CD4-positive, alpha-beta memory T cell (primary cell): ENCODE measurements at regions of chr13 and their contacts with region 1.

Region 1: GRCh38 chr13:25874907-25875306 is 176.9 kb downstream of the SHISA2 start:
- DNase-seq: peak; percentile 63 to 84 (median 73)
- H3K4me3 ChIP-seq: no peak overlapping the region
- H3K4me3 Mint-ChIP-seq: peak overlapping the region; percentile 34 to 85 (median 58)
- H3K27ac ChIP-seq: peak overlapping the region; percentile 44
- H3K27ac Mint-ChIP-seq: peak overlapping the region; percentile 67 to 91 (median 84)
- H3K4me1 ChIP-seq: peaks cover 49% of the 10 kb centered on the region
- H3K4me1 Mint-ChIP-seq: peaks cover 37 to 69% (median 54%) of the 10 kb centered on the region in 4 donors
- H3K27me3 ChIP-seq: no peaks in the 10 kb centered on the region
- H3K27me3 Mint-ChIP-seq: no peaks in the 10 kb centered on the region

Region 2: GRCh38 chr13:25602176-25602575 is 272.7 kb before region 1 on chr13:
- CTCF ChIA-PET with region 1: no interaction called
- POLR2A ChIA-PET with region 1: no interaction called
- intact Hi-C with region 1: no loop called
- DNase-seq: no peak
- H3K4me3 ChIP-seq: no peak overlapping the region
- H3K4me3 Mint-ChIP-seq: no peak overlapping the region
- H3K27ac ChIP-seq: no peak overlapping the region
- H3K27ac Mint-ChIP-seq: no peak overlapping the region
- H3K4me1 ChIP-seq: no peaks in the 10 kb centered on the region
- H3K4me1 Mint-ChIP-seq: no peaks in the 10 kb centered on the region
- H3K27me3 ChIP-seq: no peaks in the 10 kb centered on the region
- H3K27me3 Mint-ChIP-seq: peaks cover 17 to 30% of the 10 kb centered on the region in 2 donors

Region 3: DNA sequence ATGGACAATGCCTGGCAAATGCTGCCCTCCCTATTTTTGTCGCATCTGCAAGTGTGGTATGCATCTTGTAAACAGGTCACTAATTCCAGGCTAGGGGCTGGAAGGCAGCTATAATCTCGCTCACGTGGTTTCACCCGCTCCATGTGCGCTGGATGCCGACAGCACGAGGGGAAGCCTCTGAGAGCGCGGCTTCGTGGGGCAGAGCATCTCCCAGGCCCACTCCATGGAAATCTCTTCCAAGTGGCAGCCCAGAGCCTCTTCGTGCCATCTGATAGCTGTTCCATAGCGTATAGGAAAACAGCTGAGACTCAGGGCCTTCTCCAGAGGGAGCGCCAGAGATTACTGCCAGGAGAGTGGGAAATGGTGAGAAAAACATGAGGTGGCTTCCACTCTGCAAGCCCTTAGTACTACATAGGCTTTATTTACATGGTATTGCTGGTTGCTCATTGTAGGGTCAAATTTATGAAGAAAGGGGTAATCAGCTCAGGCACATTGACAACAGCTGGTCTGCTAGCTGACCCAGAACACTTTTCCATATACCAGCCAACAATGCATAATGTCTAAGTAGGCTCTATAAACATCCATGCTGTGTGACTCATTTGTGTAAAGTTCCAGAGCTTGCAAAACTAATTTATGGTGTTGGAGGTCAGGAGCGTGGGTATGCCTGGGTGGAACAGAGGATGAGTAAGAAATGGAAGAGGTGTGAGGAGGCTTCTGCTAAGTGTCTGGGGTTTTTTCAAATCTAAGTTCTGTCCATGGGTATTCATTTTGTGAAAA is 11.7 kb after region 1 on chr13:
- CTCF ChIA-PET with region 1: no interaction called
- POLR2A ChIA-PET with region 1: interaction called, 11 read pairs
- intact Hi-C with region 1: no loop called
- DNase-seq: no peak
- H3K4me3 ChIP-seq: no peak overlapping the region
- H3K4me3 Mint-ChIP-seq: no peak overlapping the region
- H3K27ac ChIP-seq: no peak overlapping the region
- H3K27ac Mint-ChIP-seq: peak overlapping the region; percentile 51 to 98 (median 78)
- H3K4me1 ChIP-seq: peaks cover 28% of the 10 kb centered on the region
- H3K4me1 Mint-ChIP-seq: peaks cover 17 to 48% (median 33%) of the 10 kb centered on the region in 4 donors
- H3K27me3 ChIP-seq: no peaks in the 10 kb centered on the region
- H3K27me3 Mint-ChIP-seq: no peaks in the 10 kb centered on the region

Region 4: GRCh38 chr13:26022538-26023292 is 147.8 kb after region 1 on chr13:
- CTCF ChIA-PET with region 1: no interaction called
- POLR2A ChIA-PET with region 1: no interaction called
- intact Hi-C with region 1: no loop called
- DNase-seq: no peak
- H3K4me3 ChIP-seq: no peak overlapping the region
- H3K4me3 Mint-ChIP-seq: no peak overlapping the region
- H3K27ac ChIP-seq: no peak overlapping the region
- H3K27ac Mint-ChIP-seq: peak overlapping the region in 1 of 7 donors; percentile 16
- H3K4me1 ChIP-seq: no peaks in the 10 kb centered on the region
- H3K4me1 Mint-ChIP-seq: peaks cover 0 to 7% (median 5%) of the 10 kb centered on the region in 4 donors
- H3K27me3 ChIP-seq: no peaks in the 10 kb centered on the region
- H3K27me3 Mint-ChIP-seq: peaks cover 0 to 2% of the 10 kb centered on the region in 2 donors